ENCODE measurements at regions of chr7 and their contacts with region 1.

Region 1: GRCh38 chr7:54788664-54789063 is 29.7 kb upstream of the SEC61G start:
- DNase-seq: no peak
- ATAC-seq: peak; percentile 76

Region 2: DNA sequence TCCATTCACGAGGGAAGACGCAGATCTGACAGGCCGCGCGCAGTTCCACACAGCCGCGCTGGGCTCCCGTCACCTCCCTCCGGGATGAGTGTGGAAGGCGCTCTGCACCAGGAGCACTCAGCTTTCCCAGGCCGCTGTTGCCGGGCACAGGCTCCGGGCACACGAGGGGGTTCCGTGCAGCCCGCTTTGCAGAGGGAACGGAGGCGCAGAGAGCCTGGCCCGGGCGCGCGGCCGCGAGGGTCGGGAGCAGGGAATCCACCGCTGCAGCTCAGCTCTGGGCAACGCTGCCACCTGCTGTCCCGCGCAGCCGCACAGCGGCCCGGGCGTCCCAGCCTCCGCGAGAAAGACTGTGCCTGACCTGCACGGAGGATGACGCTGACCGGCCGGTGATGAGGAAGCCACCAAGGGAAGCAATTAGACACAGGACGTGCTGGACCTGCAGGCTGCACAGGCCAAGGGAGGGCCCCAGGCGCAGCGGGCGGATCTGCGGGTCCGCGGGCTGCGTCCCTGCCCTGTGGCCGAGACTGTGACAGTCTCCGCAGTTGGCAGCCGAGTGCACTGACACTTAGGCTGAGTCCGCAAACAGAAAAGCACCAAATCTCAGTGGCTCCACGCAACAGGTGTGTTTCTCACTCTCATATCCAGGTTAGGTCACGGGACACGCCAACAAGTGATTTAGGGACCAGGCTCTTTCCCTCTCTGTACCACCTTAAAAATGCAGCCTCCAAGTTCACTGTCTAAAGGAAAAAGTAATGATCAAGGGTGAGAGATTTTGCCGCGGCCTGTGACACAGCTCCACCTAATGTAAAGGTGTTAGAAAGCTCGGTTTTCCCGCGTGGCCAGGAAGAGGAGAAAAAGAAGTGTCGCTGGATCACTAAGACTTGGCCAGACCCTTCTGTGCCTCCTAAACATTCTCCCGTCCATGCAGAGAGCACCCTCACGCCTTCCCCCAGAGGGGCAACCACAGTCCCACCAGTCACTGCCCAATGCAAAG is 124.1 kb before region 1 on chr7:
- intact Hi-C with region 1: no loop called
- DNase-seq: peak; percentile 55
- ATAC-seq: peak; percentile 85

Region 3: DNA sequence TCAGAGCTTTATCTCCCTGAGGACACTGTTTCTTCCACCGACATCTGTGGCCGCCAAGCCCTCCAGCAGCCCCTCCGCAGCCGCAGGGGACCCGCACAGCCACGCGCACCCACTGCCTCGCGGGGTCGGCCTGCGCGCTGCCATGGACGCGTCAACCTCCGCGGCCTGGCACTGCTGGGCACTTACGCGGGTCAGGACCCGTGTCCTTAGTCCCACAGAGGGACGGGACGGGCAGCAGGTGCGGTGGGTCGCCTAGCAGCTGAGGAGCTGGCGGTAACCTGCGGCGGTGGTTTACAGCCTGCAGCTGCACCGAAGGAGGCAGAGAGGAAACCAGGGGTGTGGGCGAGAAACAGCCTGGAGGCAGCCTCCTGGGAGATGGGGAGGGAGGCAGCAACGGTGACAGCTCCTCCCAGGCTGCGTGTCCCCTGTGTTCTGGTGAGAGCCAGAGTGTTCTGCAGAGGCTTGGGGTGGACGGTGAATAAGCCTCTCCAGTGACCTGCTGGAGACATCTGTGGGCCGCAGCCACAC is 90.9 kb before region 1 on chr7:
- intact Hi-C with region 1: no loop called
- DNase-seq: no peak
- ATAC-seq: no peak

Region 4: DNA sequence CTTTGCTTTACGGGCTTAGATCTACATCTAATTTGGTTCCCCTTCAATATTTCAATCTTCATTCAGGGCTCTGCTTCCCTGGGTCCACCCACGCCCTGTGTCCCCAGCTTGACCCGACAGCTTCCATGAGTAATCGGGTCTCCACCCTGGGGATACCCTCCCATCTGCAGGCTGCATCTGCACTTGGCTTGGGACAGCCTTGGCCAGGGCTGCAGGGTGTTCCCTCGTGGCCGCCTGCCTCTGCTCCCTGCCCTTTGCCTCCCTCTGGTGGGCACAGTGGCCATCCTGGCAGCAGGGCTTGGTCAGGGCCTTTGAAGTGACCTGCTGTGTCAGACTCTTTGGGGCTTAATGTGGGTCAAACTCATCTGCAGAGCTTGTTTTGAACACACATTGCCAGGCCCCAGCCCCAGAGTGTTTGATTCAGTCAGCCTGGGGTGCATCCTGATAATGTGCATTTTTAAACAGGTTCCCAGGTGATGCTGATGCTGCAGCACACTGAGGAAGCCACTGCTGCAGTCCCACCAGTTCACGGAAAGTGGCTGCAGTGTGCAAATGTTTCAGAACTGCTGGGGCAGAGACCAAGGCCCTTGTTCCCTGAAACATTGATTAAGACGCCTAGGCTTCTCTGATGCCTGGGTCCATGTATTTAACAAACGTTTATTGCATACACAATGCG is 51.0 kb after region 1 on chr7:
- intact Hi-C with region 1: loop called (anchors 5 kb)
- DNase-seq: peak; percentile 86
- ATAC-seq: peak; percentile 95

Region 5: GRCh38 chr7:55255496-55256435 is 467.1 kb after region 1 on chr7:
- intact Hi-C with region 1: loop called (anchors 5 kb)
- DNase-seq: peak; percentile 91
- ATAC-seq: peak; percentile 96

Measured in left ventricle myocardium superior (tissue), 1 donor.